B cell (primary cell): ENCODE measurements at regions of chr12 and their contacts with region 1.

Region 1: GRCh38 chr12:125183187-125184067 is 118.2 kb downstream of the AACS start:
- DNase-seq: peak; percentile 84
- ATAC-seq: peak; percentile 73
- H3K4me3 ChIP-seq: no peak overlapping the region
- H3K4me3 Mint-ChIP-seq: peak overlapping the region; percentile 46
- H3K27ac ChIP-seq: no peak overlapping the region
- H3K27ac Mint-ChIP-seq: no peak overlapping the region
- H3K4me1 ChIP-seq: peaks cover 20 to 26% of the 10 kb centered on the region in 2 donors
- H3K4me1 Mint-ChIP-seq: peaks cover 21% of the 10 kb centered on the region
- H3K27me3 ChIP-seq: peaks cover 0 to 65% (median 30%) of the 10 kb centered on the region in 4 experiments
- H3K27me3 Mint-ChIP-seq: peaks cover 51% of the 10 kb centered on the region
- CTCF ChIP-seq: peak; percentile 97

Region 2: GRCh38 chr12:124837958-124838803 is 345.2 kb before region 1 on chr12:
- CTCF ChIA-PET with region 1: no interaction called
- POLR2A ChIA-PET with region 1: no interaction called
- intact Hi-C with region 1: loop called (anchors 10 kb)
- DNase-seq: no peak
- ATAC-seq: no peak
- H3K4me3 ChIP-seq: no peak overlapping the region
- H3K4me3 Mint-ChIP-seq: no peak overlapping the region
- H3K27ac ChIP-seq: no peak overlapping the region
- H3K27ac Mint-ChIP-seq: no peak overlapping the region
- H3K4me1 ChIP-seq: no peaks in the 10 kb centered on the region
- H3K4me1 Mint-ChIP-seq: no peaks in the 10 kb centered on the region
- H3K27me3 ChIP-seq: no peaks in the 10 kb centered on the region
- H3K27me3 Mint-ChIP-seq: no peaks in the 10 kb centered on the region
- CTCF ChIP-seq: no peak

Region 3: DNA sequence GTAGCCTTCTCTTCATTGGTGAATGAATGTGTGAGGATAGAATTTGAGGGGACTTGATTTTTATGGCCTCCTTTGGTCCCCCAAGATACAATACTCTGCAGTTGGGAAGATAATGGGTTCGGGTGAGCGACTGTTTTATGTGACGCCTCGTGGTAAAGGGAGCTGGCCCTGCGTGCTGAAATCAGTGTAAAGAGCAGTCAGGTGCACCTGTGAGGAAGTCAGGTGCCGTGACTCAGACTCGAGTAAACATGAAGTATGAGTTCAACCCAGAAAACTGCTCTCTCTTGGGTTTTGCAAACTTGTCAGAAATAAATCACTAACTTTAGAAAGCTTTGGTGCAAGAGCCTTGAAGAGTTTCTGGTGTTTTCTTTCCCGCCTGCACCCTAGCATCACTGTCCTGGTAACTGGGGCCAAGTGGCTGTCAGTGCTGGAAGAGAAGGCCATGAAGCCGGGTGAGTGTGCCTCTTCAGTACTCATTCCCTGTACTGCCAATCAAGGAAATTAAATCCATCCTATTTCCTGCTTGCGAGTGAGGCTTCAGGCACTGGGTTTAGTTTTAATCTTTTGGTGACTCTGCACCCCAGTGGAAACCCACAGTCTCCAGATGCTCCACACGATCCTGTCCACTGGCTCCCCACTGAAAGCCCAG is 59.0 kb before region 1 on chr12:
- CTCF ChIA-PET with region 1: no interaction called
- POLR2A ChIA-PET with region 1: no interaction called
- intact Hi-C with region 1: no loop called
- DNase-seq: no peak
- ATAC-seq: no peak
- H3K4me3 ChIP-seq: no peak overlapping the region
- H3K4me3 Mint-ChIP-seq: no peak overlapping the region
- H3K27ac ChIP-seq: no peak overlapping the region
- H3K27ac Mint-ChIP-seq: peak overlapping the region; percentile 20
- H3K4me1 ChIP-seq: no peaks in the 10 kb centered on the region
- H3K4me1 Mint-ChIP-seq: no peaks in the 10 kb centered on the region
- H3K27me3 ChIP-seq: no peaks in the 10 kb centered on the region
- H3K27me3 Mint-ChIP-seq: no peaks in the 10 kb centered on the region
- CTCF ChIP-seq: no peak

Region 4: GRCh38 chr12:125203145-125203765 is 19.8 kb after region 1 on chr12:
- CTCF ChIA-PET with region 1: interaction called, 10 read pairs
- POLR2A ChIA-PET with region 1: no interaction called
- intact Hi-C with region 1: no loop called
- DNase-seq: no peak
- ATAC-seq: no peak
- H3K4me3 ChIP-seq: no peak overlapping the region
- H3K4me3 Mint-ChIP-seq: no peak overlapping the region
- H3K27ac ChIP-seq: no peak overlapping the region
- H3K27ac Mint-ChIP-seq: no peak overlapping the region
- H3K4me1 ChIP-seq: no peaks in the 10 kb centered on the region
- H3K4me1 Mint-ChIP-seq: no peaks in the 10 kb centered on the region
- H3K27me3 ChIP-seq: peaks cover 0 to 8% (median 2%) of the 10 kb centered on the region in 4 experiments
- H3K27me3 Mint-ChIP-seq: peaks cover 34% of the 10 kb centered on the region
- CTCF ChIP-seq: peak; percentile 50

Region 5: GRCh38 chr12:125220404-125220803 is 37.0 kb after region 1 on chr12:
- CTCF ChIA-PET with region 1: no interaction called
- POLR2A ChIA-PET with region 1: no interaction called
- intact Hi-C with region 1: no loop called
- DNase-seq: no peak
- ATAC-seq: no peak
- H3K4me3 ChIP-seq: no peak overlapping the region
- H3K4me3 Mint-ChIP-seq: no peak overlapping the region
- H3K27ac ChIP-seq: no peak overlapping the region
- H3K27ac Mint-ChIP-seq: no peak overlapping the region
- H3K4me1 ChIP-seq: no peaks in the 10 kb centered on the region
- H3K4me1 Mint-ChIP-seq: no peaks in the 10 kb centered on the region
- H3K27me3 ChIP-seq: peaks cover 0 to 8% (median 0%) of the 10 kb centered on the region in 4 experiments
- H3K27me3 Mint-ChIP-seq: peaks cover 28% of the 10 kb centered on the region
- CTCF ChIP-seq: no peak

Region 6: GRCh38 chr12:126747530-126748149 is 1564.2 kb after region 1 on chr12:
- CTCF ChIA-PET with region 1: interaction called, 3 read pairs
- POLR2A ChIA-PET with region 1: no interaction called
- intact Hi-C with region 1: loop called (anchors 10 kb)
- DNase-seq: peak; percentile 32
- ATAC-seq: no peak
- H3K4me3 ChIP-seq: no peak overlapping the region
- H3K4me3 Mint-ChIP-seq: no peak overlapping the region
- H3K27ac ChIP-seq: no peak overlapping the region
- H3K27ac Mint-ChIP-seq: no peak overlapping the region
- H3K4me1 ChIP-seq: no peaks in the 10 kb centered on the region
- H3K4me1 Mint-ChIP-seq: no peaks in the 10 kb centered on the region
- H3K27me3 ChIP-seq: no peaks in the 10 kb centered on the region
- H3K27me3 Mint-ChIP-seq: no peaks in the 10 kb centered on the region
- CTCF ChIP-seq: peak; percentile 90

Region 7: DNA sequence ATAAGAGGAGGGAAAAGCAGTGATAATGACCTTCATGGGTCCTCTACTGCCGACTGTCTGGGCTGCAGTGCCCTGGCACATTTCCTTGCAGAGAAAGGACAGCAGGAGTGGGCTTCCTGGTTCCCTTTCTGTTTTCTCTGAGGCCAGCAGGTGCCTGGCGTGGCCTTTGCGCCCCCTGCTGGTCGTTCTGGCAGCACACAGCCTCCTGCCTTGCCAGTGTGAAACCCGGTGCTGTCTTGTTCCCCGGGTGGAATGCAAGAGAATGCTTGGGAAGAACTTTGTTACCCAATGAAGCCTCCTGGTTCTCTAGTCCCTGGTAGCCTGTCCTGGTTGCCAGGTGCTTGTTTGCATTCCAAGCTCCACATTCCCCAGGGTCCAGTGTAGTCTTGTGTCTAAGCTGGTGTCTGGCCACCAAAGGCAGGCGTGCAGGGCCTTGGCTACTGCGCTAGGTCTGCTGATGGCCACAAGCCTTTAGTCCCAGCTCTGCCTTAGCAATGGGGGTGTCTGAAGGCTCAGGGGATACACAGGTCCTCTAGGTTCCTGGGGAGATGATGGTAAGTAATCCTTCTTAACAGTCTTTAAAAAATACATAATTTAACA is 1691.1 kb after region 1 on chr12:
- CTCF ChIA-PET with region 1: interaction called, 25 read pairs
- POLR2A ChIA-PET with region 1: no interaction called
- intact Hi-C with region 1: no loop called
- DNase-seq: peak; percentile 41
- ATAC-seq: no peak
- H3K4me3 ChIP-seq: no peak overlapping the region
- H3K4me3 Mint-ChIP-seq: no peak overlapping the region
- H3K27ac ChIP-seq: no peak overlapping the region
- H3K27ac Mint-ChIP-seq: no peak overlapping the region
- H3K4me1 ChIP-seq: no peaks in the 10 kb centered on the region
- H3K4me1 Mint-ChIP-seq: no peaks in the 10 kb centered on the region
- H3K27me3 ChIP-seq: no peaks in the 10 kb centered on the region
- H3K27me3 Mint-ChIP-seq: no peaks in the 10 kb centered on the region
- CTCF ChIP-seq: peak; percentile 71